Head of caudate nucleus (tissue), 42 donors: ENCODE measurements at regions of chr5 and their contacts with region 1.

Region 1: GRCh38 chr5:84564321-84565075 is 179.8 kb upstream of the EDIL3 start:
- DNase-seq: peak in 12 of 42 donors; percentile 5 to 77 (median 44)

Region 2: DNA sequence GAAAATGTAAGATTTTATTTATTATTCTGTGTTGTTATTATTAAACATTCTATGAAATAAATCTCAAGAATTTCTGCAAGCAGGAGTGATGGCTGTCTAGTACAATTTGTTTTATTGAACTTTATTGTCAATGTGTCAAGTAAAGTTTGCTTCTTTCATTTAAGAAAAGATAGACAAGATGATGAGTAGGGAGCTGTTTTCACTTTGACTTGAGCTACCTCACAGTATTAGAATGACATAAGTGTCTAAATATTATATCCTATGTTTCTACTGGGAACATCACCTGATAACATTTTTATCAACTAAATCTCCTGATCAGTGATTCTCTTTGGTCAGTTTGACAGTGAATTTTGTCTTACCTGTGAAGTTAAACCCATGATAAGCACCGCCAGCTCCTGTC is 167.1 kb before region 1 on chr5:
- intact Hi-C with region 1: loop called (anchors 5 kb)
- DNase-seq: no peak